ENCODE measurements at regions of chr15 and their contacts with region 1.

Region 1: GRCh38 chr15:47196057-47196456 is 521.2 kb upstream of the SEMA6D start:
- DNase-seq: peak; percentile 89
- H3K4me3 ChIP-seq: no peak overlapping the region
- H3K27ac ChIP-seq: no peak overlapping the region
- H3K4me1 ChIP-seq: peaks cover 0 to 8% (median 0%) of the 10 kb centered on the region in 4 donors
- H3K27me3 ChIP-seq: no peaks in the 10 kb centered on the region
- CTCF ChIP-seq: peak; percentile 64 to 89 (median 74)
- EP300 ChIP-seq: no peak
- POLR2A ChIP-seq: no peak

Region 2: DNA sequence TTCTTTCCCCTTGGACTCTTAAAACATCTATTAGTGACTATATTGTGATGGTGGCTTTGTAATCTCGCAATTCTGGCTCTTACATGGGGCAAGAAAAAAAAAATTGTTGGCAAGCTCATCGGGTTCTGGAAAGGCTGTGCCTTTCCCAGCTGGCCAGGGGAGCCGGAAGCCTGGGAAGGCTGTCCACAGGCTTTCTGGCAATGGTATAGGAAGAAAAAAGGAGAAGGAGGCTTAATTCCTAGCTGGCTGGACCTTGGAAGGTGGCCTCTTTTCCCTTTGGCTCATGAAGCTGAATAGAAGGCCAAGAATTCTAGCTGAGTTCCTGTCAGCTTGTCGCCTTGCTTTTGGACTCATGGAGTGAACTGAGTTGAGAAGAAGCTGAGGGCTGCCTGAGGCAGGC is 277.8 kb after region 1 on chr15:
- intact Hi-C with region 1: loop called (anchors 10 kb)
- DNase-seq: peak; percentile 81
- H3K4me3 ChIP-seq: no peak overlapping the region
- H3K27ac ChIP-seq: peak overlapping the region in 3 of 4 donors; percentile 10 to 49 (median 20)
- H3K4me1 ChIP-seq: peaks cover 0 to 20% (median 11%) of the 10 kb centered on the region in 4 donors
- H3K27me3 ChIP-seq: no peaks in the 10 kb centered on the region
- CTCF ChIP-seq: no peak
- EP300 ChIP-seq: no peak
- POLR2A ChIP-seq: no peak

Region 3: GRCh38 chr15:47987908-47988532 is 792.0 kb after region 1 on chr15:
- intact Hi-C with region 1: loop called (anchors 1 kb)
- DNase-seq: no peak
- H3K4me3 ChIP-seq: no peak overlapping the region
- H3K27ac ChIP-seq: no peak overlapping the region
- H3K4me1 ChIP-seq: no peaks in the 10 kb centered on the region
- H3K27me3 ChIP-seq: no peaks in the 10 kb centered on the region
- CTCF ChIP-seq: peak; percentile 41 to 62 (median 45)
- EP300 ChIP-seq: no peak
- POLR2A ChIP-seq: no peak

Region 4: GRCh38 chr15:48250640-48251076 is 1054.6 kb after region 1 on chr15:
- intact Hi-C with region 1: loop called (anchors 2 kb)
- DNase-seq: no peak
- H3K4me3 ChIP-seq: no peak overlapping the region
- H3K27ac ChIP-seq: no peak overlapping the region
- H3K4me1 ChIP-seq: no peaks in the 10 kb centered on the region
- H3K27me3 ChIP-seq: no peaks in the 10 kb centered on the region
- CTCF ChIP-seq: peak in 3 of 4 experiments; percentile 45 to 55 (median 47)
- EP300 ChIP-seq: no peak
- POLR2A ChIP-seq: no peak

Region 5: DNA sequence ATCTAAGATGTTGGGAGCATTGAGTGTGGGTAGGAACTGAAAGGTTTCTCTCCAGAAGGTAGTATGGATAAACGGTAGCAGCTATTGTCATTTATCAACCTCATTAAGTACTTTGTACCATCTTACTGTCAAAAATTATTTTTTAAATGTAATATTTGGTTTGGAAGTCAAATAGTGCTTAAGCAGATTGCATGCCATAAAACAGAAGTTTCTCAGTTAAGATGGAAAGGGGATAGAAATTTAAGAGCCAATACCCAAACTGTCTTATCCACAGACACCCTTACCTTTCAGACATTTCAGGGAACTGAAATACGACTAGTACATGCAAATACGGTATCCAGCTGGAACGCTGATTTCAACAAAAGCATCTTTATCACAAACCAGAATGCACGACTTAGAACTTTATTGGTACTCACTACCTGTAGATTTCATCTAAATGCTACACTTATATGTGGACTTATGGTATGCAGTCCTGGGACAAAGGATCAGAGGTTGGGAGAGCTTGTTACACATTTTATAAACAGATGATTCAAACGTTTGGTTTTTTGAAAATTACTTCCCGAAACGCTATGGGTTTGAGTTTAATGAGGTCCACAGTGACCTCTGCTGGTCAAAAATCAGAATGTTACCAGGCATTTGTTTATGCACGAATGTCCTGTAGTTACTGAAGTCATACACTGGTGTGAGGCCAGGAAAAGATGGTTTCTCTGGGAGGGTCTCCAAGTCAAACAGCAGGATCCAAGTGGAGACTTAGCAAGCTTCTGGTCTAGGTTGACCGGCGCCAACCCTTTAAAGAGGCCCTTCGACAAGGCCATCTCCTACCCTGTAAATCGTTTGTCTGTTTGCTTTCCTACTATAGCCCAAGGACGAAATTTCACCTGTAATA is 1089.5 kb after region 1 on chr15:
- intact Hi-C with region 1: loop called (anchors 5 kb)
- DNase-seq: peak; percentile 64
- H3K4me3 ChIP-seq: peak overlapping the region in 2 of 4 donors; percentile 12 to 26
- H3K27ac ChIP-seq: no peak overlapping the region
- H3K4me1 ChIP-seq: peaks cover 0 to 17% (median 13%) of the 10 kb centered on the region in 4 donors
- H3K27me3 ChIP-seq: no peaks in the 10 kb centered on the region
- CTCF ChIP-seq: peak; percentile 35 to 71 (median 63)
- EP300 ChIP-seq: no peak
- POLR2A ChIP-seq: no peak

Region 6: GRCh38 chr15:48352474-48353072 is 1156.5 kb after region 1 on chr15:
- intact Hi-C with region 1: loop called (anchors 5 kb)
- DNase-seq: peak; percentile 69
- H3K4me3 ChIP-seq: peak overlapping the region in 1 of 4 donors; percentile 13
- H3K27ac ChIP-seq: no peak overlapping the region
- H3K4me1 ChIP-seq: peaks cover 0 to 2% (median 0%) of the 10 kb centered on the region in 4 donors
- H3K27me3 ChIP-seq: no peaks in the 10 kb centered on the region
- CTCF ChIP-seq: peak; percentile 29 to 80 (median 49)
- EP300 ChIP-seq: no peak
- POLR2A ChIP-seq: no peak